OCI-LY7 (cell line): ENCODE measurements at regions of chr1 and their contacts with region 1.

Region 1: DNA sequence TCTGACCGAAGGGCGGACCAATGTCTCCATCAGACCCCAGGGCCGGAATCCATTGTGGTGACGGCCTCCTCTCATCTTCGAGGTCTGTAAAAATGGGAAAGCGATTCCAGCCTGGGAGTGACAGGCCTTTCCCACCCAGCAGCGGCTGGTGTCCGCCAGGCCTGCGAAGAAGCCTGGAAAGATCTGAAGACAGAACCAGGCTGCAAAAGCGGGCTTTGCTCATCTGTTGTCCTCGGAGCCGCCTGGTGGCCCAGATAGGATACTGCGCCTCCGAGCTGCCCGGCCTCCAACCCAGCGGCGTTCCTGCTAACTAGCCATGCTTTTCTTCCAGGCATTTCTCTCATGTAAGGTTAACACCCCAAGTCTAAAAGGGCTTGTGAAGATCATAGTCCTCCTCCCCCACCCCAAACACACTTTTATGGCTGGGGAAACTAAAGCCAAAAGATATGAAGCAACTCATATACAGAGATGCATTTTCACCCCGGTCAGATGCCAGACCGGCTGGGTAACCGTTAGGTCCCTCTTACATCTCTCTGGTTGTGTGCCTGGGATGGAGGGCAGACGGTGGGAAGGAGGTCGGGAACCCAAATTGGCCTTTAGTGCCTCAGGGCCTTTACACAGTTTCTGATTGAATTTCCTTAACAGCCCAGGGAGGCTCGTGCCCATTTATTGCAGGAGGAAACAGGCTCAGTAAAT is 1.9 kb upstream of the DHRS3 start:
- DNase-seq: peak; percentile 59
- H3K4me3 ChIP-seq: no peak overlapping the region
- H3K27ac ChIP-seq: no peak overlapping the region
- H3K4me1 ChIP-seq: no peaks in the 10 kb centered on the region
- CTCF ChIP-seq: peak; percentile 85

Region 2: DNA sequence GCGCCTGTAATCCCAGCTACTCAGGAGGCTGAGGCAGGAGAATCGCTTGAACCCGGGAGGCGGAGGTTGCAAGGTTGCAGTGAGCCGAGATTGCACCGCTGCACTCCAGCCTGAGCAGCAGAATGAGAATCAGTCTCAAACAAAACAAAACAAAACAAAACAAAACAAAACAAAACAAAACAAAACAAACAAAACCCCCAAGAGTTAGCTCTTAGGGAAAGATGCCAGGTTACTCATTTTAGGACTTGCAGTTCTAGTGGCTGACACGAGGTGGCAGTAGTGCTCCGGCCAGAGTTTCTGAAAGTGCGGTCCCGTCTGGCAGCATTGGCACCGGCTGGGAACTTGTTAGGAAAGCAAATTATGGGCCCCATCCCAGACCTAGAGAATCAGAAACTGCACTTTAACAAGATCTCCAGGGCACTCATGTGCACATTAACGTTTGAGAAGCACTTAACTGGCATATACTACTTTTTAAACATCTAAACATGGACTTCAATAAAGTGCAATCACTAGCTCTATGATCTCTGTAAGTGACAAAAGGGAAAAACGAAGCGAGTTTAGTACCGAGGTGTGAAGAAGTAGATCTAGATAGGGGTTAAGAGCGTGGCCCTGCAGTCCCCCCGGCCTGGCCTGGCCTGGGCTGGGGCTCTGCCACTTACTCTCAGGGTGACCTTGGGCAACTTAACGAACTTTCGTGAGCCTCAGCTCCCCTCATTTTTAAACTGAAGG is 495.1 kb before region 1 on chr1:
- CTCF ChIA-PET with region 1: no interaction called
- POLR2A ChIA-PET with region 1: no interaction called
- intact Hi-C with region 1: loop called (anchors 10 kb)
- DNase-seq: peak; percentile 70
- H3K4me3 ChIP-seq: no peak overlapping the region
- H3K27ac ChIP-seq: no peak overlapping the region
- H3K4me1 ChIP-seq: no peaks in the 10 kb centered on the region
- CTCF ChIP-seq: peak; percentile 92

Region 3: GRCh38 chr1:12272770-12273169 is 347.2 kb before region 1 on chr1:
- CTCF ChIA-PET with region 1: no interaction called
- POLR2A ChIA-PET with region 1: no interaction called
- intact Hi-C with region 1: loop called (anchors 5 kb)
- DNase-seq: no peak
- H3K4me3 ChIP-seq: no peak overlapping the region
- H3K27ac ChIP-seq: no peak overlapping the region
- H3K4me1 ChIP-seq: no peaks in the 10 kb centered on the region
- CTCF ChIP-seq: no peak

Region 4: DNA sequence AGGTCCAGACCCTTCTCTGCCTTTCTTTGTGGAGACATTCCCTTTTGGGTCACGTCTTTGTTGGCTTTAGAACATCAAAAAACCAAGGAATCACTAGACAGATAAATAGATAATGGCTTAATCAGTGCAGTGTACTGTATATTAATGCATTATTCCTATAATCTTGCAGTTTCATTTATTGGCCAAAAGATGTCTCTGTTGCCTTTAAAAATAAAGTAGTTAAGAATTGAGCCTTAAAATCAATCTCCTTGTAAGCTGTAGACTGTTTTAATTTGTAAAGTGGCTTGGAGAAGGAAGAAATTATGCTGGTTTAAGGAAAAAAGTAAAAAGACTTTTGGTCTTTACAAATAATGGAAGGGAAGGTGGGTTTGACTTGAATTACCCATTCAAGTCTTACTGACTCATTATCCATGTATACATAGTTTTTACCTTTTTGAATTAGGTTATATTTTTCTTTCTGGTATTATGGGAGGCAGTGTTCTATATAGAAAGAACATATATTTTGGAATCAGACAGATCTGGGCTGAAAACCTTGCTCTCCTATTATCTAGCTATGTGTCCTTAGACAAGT is 305.5 kb before region 1 on chr1:
- CTCF ChIA-PET with region 1: no interaction called
- POLR2A ChIA-PET with region 1: no interaction called
- intact Hi-C with region 1: loop called (anchors 1 kb)
- DNase-seq: peak; percentile 23
- H3K4me3 ChIP-seq: no peak overlapping the region
- H3K27ac ChIP-seq: no peak overlapping the region
- H3K4me1 ChIP-seq: no peaks in the 10 kb centered on the region
- CTCF ChIP-seq: peak; percentile 84

Region 5: GRCh38 chr1:12764016-12764415 is 144.1 kb after region 1 on chr1:
- CTCF ChIA-PET with region 1: no interaction called
- POLR2A ChIA-PET with region 1: no interaction called
- intact Hi-C with region 1: no loop called
- DNase-seq: no peak
- H3K4me3 ChIP-seq: no peak overlapping the region
- H3K27ac ChIP-seq: no peak overlapping the region
- H3K4me1 ChIP-seq: no peaks in the 10 kb centered on the region
- CTCF ChIP-seq: no peak